ENCODE measurements at regions of chr2 and their contacts with region 1.

Region 1: GRCh38 chr2:85032621-85033020 is 61.7 kb downstream of the KCMF1 start:
- DNase-seq: no peak
- ATAC-seq: no peak
- H3K4me3 ChIP-seq: no peak overlapping the region
- H3K27ac ChIP-seq: no peak overlapping the region
- H3K4me1 ChIP-seq: no peaks in the 10 kb centered on the region
- H3K27me3 ChIP-seq: no peaks in the 10 kb centered on the region
- CTCF ChIP-seq: no peak
- EP300 ChIP-seq: no peak
- POLR2A ChIP-seq: no peak
- RAD21 ChIP-seq: no peak

Region 2: GRCh38 chr2:84768840-84769239 is 263.8 kb before region 1 on chr2:
- CTCF ChIA-PET with region 1: no interaction called
- POLR2A ChIA-PET with region 1: no interaction called
- RAD21 ChIA-PET with region 1: no interaction called
- SMC1A ChIA-PET with region 1: no interaction called
- in situ Hi-C with region 1: no loop called
- intact Hi-C with region 1: no loop called
- DNase-seq: no peak
- ATAC-seq: no peak
- H3K4me3 ChIP-seq: no peak overlapping the region
- H3K27ac ChIP-seq: no peak overlapping the region
- H3K4me1 ChIP-seq: no peaks in the 10 kb centered on the region
- H3K27me3 ChIP-seq: no peaks in the 10 kb centered on the region
- CTCF ChIP-seq: no peak
- EP300 ChIP-seq: no peak
- POLR2A ChIP-seq: no peak
- RAD21 ChIP-seq: no peak

Region 3: DNA sequence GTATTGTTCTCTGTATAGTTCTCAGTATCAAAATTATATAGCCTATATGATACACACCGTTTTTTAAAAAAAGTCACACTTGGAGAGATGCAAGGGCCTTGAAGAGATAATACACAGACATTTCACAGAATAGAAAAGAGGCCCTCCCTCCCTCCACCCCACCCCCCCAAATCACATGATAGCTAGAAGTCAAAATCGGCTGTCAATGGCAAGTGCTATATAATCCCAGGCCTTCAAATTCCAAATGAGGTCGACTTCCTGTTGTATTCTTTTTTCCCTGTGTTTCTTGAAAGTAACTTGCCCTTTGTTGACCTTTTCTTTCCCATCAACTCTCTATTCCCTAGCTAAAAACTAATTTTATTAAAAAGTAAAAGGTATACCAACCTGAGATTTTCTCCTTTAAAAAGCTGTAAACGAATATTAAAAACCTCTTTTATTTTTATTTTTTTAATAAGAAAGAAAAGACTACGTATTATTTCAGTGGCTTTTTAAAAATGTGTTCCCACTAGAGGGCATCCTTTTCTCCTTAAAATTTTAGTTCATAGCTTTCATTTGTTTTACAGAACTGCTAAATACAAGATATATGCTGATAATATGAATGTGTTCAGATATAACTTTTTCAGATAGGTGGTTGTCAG is 15.1 kb before region 1 on chr2:
- CTCF ChIA-PET with region 1: interaction called, 15 read pairs
- POLR2A ChIA-PET with region 1: interaction called, 5 read pairs
- RAD21 ChIA-PET with region 1: interaction called, 3 read pairs
- SMC1A ChIA-PET with region 1: interaction called, 5 read pairs
- in situ Hi-C with region 1: no loop called
- intact Hi-C with region 1: no loop called
- DNase-seq: no peak
- ATAC-seq: 0 out of 3 replicates have a peak, but pooled peaks have one; percentile 20
- H3K4me3 ChIP-seq: no peak overlapping the region
- H3K27ac ChIP-seq: no peak overlapping the region
- H3K4me1 ChIP-seq: peaks cover 13% of the 10 kb centered on the region; the same call in 1 of the 2 replicates
- H3K27me3 ChIP-seq: no peaks in the 10 kb centered on the region
- CTCF ChIP-seq: peak in 2 of 3 experiments; percentile 3 to 23; a peak in 2 of 6 replicates
- EP300 ChIP-seq: no peak
- POLR2A ChIP-seq: no peak
- RAD21 ChIP-seq: no peak